ENCODE measurements at regions of chr9 and their contacts with region 1.

Region 1: DNA sequence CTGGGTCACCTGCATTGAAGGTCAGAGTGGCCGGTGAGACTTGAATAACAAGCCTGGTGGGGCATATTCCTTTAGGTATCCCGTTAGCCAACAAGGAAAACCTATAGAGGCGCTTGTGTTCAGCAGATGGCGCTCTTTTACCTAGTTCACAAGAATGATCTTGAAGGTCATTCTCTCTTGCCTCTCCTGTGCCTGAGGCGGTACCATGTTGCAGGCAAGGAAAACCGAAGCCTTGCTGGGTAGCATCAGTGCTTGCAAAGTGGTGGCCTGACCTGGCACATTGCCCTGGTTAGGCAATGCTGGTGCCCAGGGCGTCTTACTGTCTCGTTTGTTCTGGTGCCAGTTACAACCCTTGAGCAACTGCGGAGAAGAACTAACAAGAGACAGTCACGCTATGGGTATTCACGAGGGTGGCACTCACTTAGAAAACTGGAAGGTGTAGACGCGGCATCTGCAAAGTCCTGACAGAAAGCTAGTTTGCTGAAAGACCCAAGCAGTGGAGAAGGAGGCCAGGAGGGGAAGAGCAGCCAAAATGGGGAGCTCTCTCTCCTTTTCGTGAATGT is 56.7 kb downstream of the AOPEP start:
- DNase-seq: peak; percentile 34 to 86
- ATAC-seq: peak; percentile 79 to 88 (median 83)
- H3K4me3 ChIP-seq: no peak overlapping the region
- H3K27ac ChIP-seq: peak overlapping the region in 9 of 10 donors; percentile 1 to 88 (median 82)
- H3K4me1 ChIP-seq: peaks cover 0 to 41% (median 23%) of the 10 kb centered on the region in 9 donors
- H3K27me3 ChIP-seq: no peaks in the 10 kb centered on the region
- CTCF ChIP-seq: peak; percentile 44 to 87 (median 73)

Region 2: DNA sequence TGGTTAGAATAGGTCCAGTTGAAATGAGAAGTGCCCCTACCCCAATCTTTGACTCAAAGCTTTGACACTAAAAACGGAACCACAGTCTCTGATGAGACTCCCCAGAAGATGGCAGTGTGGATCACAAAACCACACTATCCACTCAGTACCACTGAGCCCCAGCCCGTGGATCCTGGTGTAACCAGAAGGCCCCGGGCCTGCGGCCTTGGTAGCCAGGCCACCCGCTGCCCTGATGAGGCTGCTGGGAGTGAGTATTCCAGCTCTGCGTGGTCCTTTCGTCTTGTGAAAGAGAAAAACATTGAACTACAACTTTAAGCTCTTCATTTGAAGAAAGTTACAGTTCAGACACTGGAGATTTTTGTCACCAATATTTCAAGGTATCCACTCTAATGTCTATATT is 101.7 kb before region 1 on chr9:
- intact Hi-C with region 1: loop called (anchors 2 to 10 kb)
- DNase-seq: peak; percentile 68 to 81
- ATAC-seq: peak; percentile 94 to 99 (median 96)
- H3K4me3 ChIP-seq: no peak overlapping the region
- H3K27ac ChIP-seq: peak overlapping the region in 4 of 10 donors; percentile 6 to 48 (median 30)
- H3K4me1 ChIP-seq: peaks cover 0 to 9% (median 5%) of the 10 kb centered on the region in 9 donors
- H3K27me3 ChIP-seq: no peaks in the 10 kb centered on the region
- CTCF ChIP-seq: peak; percentile 50 to 85 (median 78)

Region 3: GRCh38 chr9:94827584-94828304 is 44.6 kb after region 1 on chr9:
- intact Hi-C with region 1: no loop called
- DNase-seq: peak in 1 of 2 donors; percentile 33
- ATAC-seq: peak; percentile 49 to 85 (median 72)
- H3K4me3 ChIP-seq: no peak overlapping the region
- H3K27ac ChIP-seq: peak overlapping the region in 8 of 10 donors; percentile 5 to 61 (median 47)
- H3K4me1 ChIP-seq: peaks cover 0 to 59% (median 37%) of the 10 kb centered on the region in 9 donors
- H3K27me3 ChIP-seq: no peaks in the 10 kb centered on the region
- CTCF ChIP-seq: no peak

Region 4: GRCh38 chr9:94917840-94918753 is 134.9 kb after region 1 on chr9:
- intact Hi-C with region 1: loop called in 1 of 10 experiments (anchors 10 kb)
- DNase-seq: no peak
- ATAC-seq: peak in 1 of 8 donors; percentile 10
- H3K4me3 ChIP-seq: no peak overlapping the region
- H3K27ac ChIP-seq: peak overlapping the region in 1 of 10 donors; percentile 24
- H3K4me1 ChIP-seq: peaks cover 11 to 59% (median 37%) of the 10 kb centered on the region in 9 donors
- H3K27me3 ChIP-seq: no peaks in the 10 kb centered on the region
- CTCF ChIP-seq: peak in 1 of 9 donors; percentile 3

Region 5: GRCh38 chr9:95018099-95018936 is 235.1 kb after region 1 on chr9:
- intact Hi-C with region 1: loop called in 3 of 10 experiments (anchors 5 to 10 kb)
- DNase-seq: peak; percentile 54 to 62
- ATAC-seq: peak; percentile 32 to 85 (median 78)
- H3K4me3 ChIP-seq: peak overlapping the region in 5 of 10 donors; percentile 12 to 27 (median 18)
- H3K27ac ChIP-seq: peak overlapping the region; percentile 20 to 87 (median 73)
- H3K4me1 ChIP-seq: peaks cover 22 to 100% (median 95%) of the 10 kb centered on the region in 9 donors
- H3K27me3 ChIP-seq: no peaks in the 10 kb centered on the region
- CTCF ChIP-seq: no peak

Region 6: GRCh38 chr9:95073021-95073607 is 289.9 kb after region 1 on chr9:
- intact Hi-C with region 1: loop called in 1 of 10 experiments (anchors 10 kb)
- DNase-seq: no peak
- ATAC-seq: peak; percentile 10 to 41 (median 17)
- H3K4me3 ChIP-seq: no peak overlapping the region
- H3K27ac ChIP-seq: peak overlapping the region in 7 of 10 donors; percentile 25 to 55 (median 48)
- H3K4me1 ChIP-seq: peaks cover 48 to 100% (median 98%) of the 10 kb centered on the region in 9 donors
- H3K27me3 ChIP-seq: no peaks in the 10 kb centered on the region
- CTCF ChIP-seq: peak in 7 of 9 donors; percentile 10 to 36 (median 29)

Region 7: GRCh38 chr9:95107001-95107749 is 324.0 kb after region 1 on chr9:
- intact Hi-C with region 1: no loop called
- DNase-seq: peak in 1 of 2 donors; percentile 60
- ATAC-seq: no peak
- H3K4me3 ChIP-seq: no peak overlapping the region
- H3K27ac ChIP-seq: peak overlapping the region in 3 of 10 donors; percentile 25 to 62 (median 52)
- H3K4me1 ChIP-seq: peaks cover 9 to 85% (median 28%) of the 10 kb centered on the region in 9 donors
- H3K27me3 ChIP-seq: no peaks in the 10 kb centered on the region
- CTCF ChIP-seq: no peak

Measured in heart right ventricle (tissue), 16 donors.